Psoas muscle (tissue), 8 donors: ENCODE measurements at regions of chr3 and their contacts with region 1.

Region 1: DNA sequence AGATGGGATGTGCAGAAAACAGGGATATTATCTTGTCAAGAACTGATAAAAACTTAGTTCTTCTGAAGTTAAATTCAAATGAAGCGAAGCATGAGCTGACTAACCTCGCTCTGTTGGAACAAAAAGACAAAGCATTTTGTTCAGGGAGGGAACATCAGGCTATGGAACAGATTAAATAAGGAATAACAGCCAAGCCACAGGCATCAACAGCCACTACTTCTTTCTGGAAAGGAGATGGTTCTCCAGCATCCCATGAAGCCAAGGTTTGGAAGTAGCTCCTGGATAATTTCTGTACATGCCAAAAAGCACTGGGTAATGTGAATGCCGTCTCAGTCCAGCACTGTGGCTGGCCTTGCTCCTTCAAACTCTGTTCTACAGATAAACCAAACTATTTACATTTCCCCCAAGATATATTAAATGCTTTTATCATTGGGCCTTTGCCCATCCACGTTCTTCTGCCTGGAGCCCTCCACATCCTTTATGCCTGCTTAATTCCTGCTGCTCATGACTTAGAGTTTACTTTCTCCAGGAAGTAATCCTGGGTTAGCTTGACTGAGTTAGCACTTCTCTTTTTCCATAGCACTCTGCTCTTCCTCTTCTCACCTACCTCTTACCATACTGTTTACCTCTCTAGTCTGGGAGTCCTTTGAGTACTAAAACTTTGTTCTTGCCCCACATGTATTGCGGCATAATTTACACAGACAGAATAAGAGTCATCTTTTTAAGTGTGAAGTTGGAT is 232.0 kb downstream of the CLSTN2 start:
- DNase-seq: no peak
- ATAC-seq: no peak
- H3K4me3 ChIP-seq: no peak overlapping the region
- H3K27ac ChIP-seq: no peak overlapping the region
- H3K4me1 ChIP-seq: no peaks in the 10 kb centered on the region
- H3K27me3 ChIP-seq: no peaks in the 10 kb centered on the region
- CTCF ChIP-seq: no peak

Region 2: GRCh38 chr3:140198242-140198641 is 31.2 kb after region 1 on chr3:
- intact Hi-C with region 1: loop called in 1 of 2 experiments (anchors 1 kb)
- DNase-seq: no peak
- ATAC-seq: peak in 3 of 4 donors; percentile 64 to 92 (median 79)
- H3K4me3 ChIP-seq: no peak overlapping the region
- H3K27ac ChIP-seq: no peak overlapping the region
- H3K4me1 ChIP-seq: peaks cover 4% of the 10 kb centered on the region
- H3K27me3 ChIP-seq: no peaks in the 10 kb centered on the region
- CTCF ChIP-seq: no peak